ENCODE measurements at regions of chr12 and their contacts with region 1.

Region 1: DNA sequence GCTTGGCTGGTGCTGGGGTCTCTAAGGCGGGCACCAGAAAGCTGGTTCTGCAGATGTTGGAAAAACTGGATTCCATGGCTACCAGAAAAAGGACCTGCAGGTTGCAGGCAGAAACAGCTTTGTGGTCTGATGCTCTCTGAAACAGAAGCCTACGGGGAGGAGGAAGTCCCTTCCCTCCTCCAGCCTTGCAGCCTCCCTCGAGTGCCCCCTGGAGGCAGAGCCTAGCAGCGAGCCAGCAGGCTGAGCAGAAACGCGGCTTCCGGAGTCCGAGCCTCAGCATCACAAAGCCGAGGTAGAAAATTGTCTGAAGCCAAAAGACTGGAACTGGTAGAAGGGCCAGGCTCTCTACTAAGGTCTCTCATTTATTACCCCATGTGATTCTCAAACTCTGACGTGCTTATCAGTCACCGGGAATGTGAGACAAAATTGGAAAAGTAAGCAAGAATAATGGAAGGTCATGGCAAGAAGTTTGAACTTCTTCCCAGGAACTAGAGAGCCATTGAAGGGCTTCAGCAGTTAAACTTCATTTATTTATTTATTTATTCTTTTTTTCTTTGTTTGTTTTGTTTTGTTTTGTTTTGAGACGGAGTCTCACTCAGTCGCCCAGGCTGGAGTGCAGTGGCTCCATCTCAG is 82.2 kb upstream of the CPSF6 start:
- DNase-seq: peak; percentile 97
- ATAC-seq: peak; percentile 83
- H3K4me3 Mint-ChIP-seq: peak overlapping the region; percentile 42
- H3K27ac Mint-ChIP-seq: peak overlapping the region; percentile 58
- H3K4me1 Mint-ChIP-seq: peaks cover 55% of the 10 kb centered on the region
- H3K27me3 Mint-ChIP-seq: no peaks in the 10 kb centered on the region

Region 2: GRCh38 chr12:68831272-68831671 is 325.9 kb before region 1 on chr12:
- CTCF ChIA-PET with region 1: no interaction called
- POLR2A ChIA-PET with region 1: no interaction called
- intact Hi-C with region 1: no loop called
- DNase-seq: no peak
- ATAC-seq: no peak
- H3K4me3 Mint-ChIP-seq: no peak overlapping the region
- H3K27ac Mint-ChIP-seq: no peak overlapping the region
- H3K4me1 Mint-ChIP-seq: peaks cover 19% of the 10 kb centered on the region
- H3K27me3 Mint-ChIP-seq: no peaks in the 10 kb centered on the region

Region 3: DNA sequence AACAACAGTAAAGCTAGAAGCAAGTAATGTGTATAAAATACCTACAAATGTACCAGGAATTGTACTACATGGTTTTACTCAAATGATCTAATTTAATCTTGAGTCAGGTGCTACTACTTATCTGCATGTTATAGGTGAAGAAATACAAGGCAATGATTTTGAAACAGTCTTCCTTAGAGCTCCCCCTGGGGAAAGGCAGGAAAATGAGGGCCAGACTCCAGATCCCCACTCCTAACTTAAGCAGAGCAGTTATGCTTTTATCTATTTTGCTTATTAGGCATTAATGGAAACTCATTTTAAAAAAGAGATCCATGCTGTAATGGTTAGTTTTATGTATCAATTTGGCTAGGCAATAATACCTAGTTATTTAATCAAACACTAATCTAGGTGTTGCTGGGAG is 27.1 kb before region 1 on chr12:
- CTCF ChIA-PET with region 1: interaction called, 12 read pairs
- POLR2A ChIA-PET with region 1: no interaction called
- intact Hi-C with region 1: no loop called
- DNase-seq: no peak
- ATAC-seq: no peak
- H3K4me3 Mint-ChIP-seq: no peak overlapping the region
- H3K27ac Mint-ChIP-seq: no peak overlapping the region
- H3K4me1 Mint-ChIP-seq: no peaks in the 10 kb centered on the region
- H3K27me3 Mint-ChIP-seq: peaks cover 3% of the 10 kb centered on the region

Region 4: GRCh38 chr12:69254046-69254445 is 96.9 kb after region 1 on chr12:
- CTCF ChIA-PET with region 1: interaction called, 99 read pairs
- POLR2A ChIA-PET with region 1: interaction called, 4 read pairs
- intact Hi-C with region 1: loop called (anchors 1 kb)
- DNase-seq: no peak
- ATAC-seq: peak; percentile 91
- H3K4me3 Mint-ChIP-seq: no peak overlapping the region
- H3K27ac Mint-ChIP-seq: peak overlapping the region; percentile 59
- H3K4me1 Mint-ChIP-seq: peaks cover 37% of the 10 kb centered on the region
- H3K27me3 Mint-ChIP-seq: no peaks in the 10 kb centered on the region

Region 5: DNA sequence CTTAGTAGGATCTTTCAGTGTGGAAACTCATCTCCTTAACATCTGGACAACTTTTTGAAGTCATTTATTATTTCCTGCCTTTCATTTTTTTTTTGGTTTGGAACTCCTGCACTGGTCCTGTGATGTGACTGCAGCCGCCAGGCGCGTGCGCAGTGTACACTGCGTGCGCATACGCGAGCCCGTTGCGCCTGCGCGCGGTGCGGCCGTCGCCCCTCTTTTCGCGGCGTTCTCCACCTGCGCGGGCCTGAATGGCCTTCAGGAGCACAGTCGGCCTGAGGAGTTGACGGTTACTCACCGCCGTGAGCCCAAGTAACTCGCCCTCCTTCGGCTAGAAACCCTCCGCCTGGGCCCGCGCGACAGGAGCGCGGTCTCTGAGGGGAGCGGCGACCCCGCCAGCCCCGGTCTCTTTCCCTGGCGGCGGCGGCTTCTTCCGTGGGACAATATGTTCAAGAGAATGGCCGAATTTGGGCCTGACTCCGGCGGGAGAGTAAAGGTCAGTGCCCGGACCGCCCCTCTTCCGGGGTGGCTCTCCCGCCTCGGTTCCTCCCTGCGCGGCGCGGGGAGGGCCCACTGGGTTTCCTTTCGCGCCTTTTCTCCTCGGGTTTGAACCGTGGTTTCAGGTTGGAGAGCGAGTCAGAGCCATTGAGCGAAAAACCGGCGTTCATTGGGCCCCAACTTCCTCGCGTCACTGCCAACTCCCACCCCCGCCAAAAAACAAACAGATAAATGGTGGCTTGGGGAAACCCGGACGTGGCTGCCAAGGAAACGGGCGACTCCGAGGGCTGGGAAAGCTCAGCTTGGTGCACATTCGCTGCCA is 202.6 kb after region 1 on chr12 and contains the start of gene YEATS4:
- CTCF ChIA-PET with region 1: interaction called, 6 read pairs
- POLR2A ChIA-PET with region 1: interaction called, 4 read pairs
- intact Hi-C with region 1: loop called in 1 of 2 experiments (anchors 1 kb)
- DNase-seq: peak; percentile 92
- ATAC-seq: peak; percentile 83
- H3K4me3 Mint-ChIP-seq: peak within 1 kb of the TSS; percentile 91
- H3K27ac Mint-ChIP-seq: peak within 1 kb of the TSS; percentile 97
- H3K4me1 Mint-ChIP-seq: peaks cover 29% of the 10 kb centered on the region
- H3K27me3 Mint-ChIP-seq: peaks cover 1% of the 10 kb centered on the region
- total RNA-seq, gene YEATS4: 55.4 to 59.8 TPM

Region 6: DNA sequence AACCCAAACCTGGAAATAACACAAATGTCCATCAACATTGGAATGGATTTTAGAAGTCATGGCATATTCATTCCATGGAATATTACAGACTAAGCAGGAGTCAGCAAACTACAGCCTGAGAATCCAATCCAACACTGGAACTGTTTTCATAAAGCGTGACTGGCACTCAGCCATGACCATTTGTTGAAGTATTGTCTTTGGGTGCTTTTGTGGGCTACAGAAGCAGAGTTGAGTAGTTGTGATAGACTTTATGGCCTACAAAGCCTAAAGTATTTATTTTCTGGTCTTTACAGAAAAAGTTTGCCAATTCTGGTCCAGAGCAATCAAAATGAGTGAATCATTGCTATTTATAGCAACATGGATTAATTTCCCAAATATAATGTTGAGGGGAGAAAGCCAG is 278.5 kb after region 1 on chr12:
- CTCF ChIA-PET with region 1: no interaction called
- POLR2A ChIA-PET with region 1: no interaction called
- intact Hi-C with region 1: no loop called
- DNase-seq: no peak
- ATAC-seq: no peak
- H3K4me3 Mint-ChIP-seq: no peak overlapping the region
- H3K27ac Mint-ChIP-seq: no peak overlapping the region
- H3K4me1 Mint-ChIP-seq: no peaks in the 10 kb centered on the region
- H3K27me3 Mint-ChIP-seq: no peaks in the 10 kb centered on the region

Region 7: DNA sequence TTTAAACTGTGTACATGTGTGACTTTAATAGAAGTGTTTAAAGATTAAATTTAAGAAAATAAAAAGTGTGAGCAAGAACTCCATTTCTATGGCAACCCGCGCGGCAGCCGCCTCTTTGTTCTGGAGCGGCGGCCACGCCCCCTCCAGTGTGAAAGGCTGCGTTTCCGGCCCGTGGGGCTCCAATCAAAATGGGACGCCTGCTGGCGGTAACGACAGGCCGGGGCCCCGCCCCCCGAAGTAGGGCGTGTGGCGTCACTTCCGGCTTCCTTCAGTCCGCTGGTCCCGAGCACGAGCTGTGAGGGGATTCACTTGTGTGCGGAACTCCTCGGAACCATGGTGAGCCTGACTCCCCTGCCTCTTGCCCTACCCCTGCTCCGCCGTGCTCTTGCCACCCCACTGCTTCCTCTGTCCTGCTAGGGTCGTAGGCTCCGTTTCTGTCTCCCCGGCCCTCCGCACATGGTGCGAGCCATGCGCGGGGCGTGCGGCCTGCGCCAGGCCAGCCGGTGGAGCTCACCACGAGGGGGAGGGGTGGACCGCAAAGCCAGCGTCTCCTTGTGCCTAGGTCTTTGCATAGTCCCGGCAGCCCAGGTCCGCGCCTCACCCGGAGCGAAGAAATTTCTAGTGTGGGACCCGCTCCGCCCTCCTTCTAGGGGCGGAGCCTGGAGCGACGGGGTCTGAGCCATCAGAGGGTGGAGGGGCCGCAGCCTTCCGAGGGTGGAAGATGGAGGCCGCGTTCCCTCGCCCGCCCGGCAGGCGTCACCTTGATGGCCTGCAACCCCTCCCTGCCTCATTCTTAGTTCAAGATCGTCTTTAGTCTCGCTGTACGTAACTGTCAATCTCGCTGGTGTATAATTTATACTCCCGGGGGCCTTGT is 428.3 kb after region 1 on chr12 and contains the start of gene CCT2:
- CTCF ChIA-PET with region 1: no interaction called
- POLR2A ChIA-PET with region 1: no interaction called
- intact Hi-C with region 1: loop called in 1 of 2 experiments (anchors 2 kb)
- DNase-seq: peak; percentile 98
- ATAC-seq: peak; percentile 94
- H3K4me3 Mint-ChIP-seq: peak within 1 kb of the TSS; percentile 96
- H3K27ac Mint-ChIP-seq: peak within 1 kb of the TSS; percentile 95
- H3K4me1 Mint-ChIP-seq: peaks cover 30% of the 10 kb centered on the region
- H3K27me3 Mint-ChIP-seq: no peaks in the 10 kb centered on the region
- total RNA-seq, gene CCT2: 293 to 360 TPM